ENCODE measurements at regions of chr19 and their contacts with region 1.

Region 1: DNA sequence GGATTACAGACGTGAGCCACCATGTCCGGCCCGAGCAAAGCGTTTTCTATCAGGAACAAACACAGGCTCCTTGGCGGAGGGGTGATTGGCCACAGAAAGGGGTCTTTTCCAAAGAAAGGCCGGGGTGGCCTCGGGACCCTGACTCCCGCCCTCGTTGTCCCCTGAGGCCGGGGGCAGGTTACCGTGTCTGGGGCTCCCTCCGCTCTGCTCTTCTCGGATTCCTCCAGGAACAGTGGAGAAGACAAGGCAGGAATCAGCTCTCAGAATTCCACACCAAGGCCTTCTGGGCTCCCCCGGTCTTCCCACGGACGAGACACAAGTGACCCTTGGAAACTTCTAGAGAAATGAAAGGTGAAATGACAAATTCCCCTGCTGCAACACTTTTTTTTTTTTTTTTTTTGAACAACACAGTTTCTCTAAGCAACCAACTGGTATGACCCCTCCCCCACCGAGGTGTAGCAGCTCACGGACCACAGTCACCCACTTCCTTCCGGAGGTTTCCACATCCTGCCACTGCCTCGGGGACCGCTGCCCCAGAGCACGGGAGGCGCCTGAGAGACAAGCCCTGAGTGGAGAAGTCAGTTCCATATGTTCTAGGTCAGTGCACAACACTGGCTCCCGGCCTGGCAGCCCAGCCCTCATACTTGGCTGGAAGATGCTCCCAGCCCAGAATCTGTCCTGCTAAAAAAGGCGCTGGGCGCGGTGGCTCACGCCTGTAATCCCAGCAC is 11.0 kb downstream of the MOB3A start:
- DNase-seq: peak in 3 of 4 donors; percentile 43 to 82 (median 49)
- ATAC-seq: no peak
- H3K4me3 ChIP-seq: no peak overlapping the region
- H3K27ac ChIP-seq: peak overlapping the region in 2 of 4 donors; percentile 34 to 53
- H3K4me1 ChIP-seq: peaks cover 9% of the 10 kb centered on the region
- H3K27me3 ChIP-seq: no peaks in the 10 kb centered on the region
- CTCF ChIP-seq: no peak
- POLR2A ChIP-seq: peak in 1 of 3 donors; percentile 17

Region 2: DNA sequence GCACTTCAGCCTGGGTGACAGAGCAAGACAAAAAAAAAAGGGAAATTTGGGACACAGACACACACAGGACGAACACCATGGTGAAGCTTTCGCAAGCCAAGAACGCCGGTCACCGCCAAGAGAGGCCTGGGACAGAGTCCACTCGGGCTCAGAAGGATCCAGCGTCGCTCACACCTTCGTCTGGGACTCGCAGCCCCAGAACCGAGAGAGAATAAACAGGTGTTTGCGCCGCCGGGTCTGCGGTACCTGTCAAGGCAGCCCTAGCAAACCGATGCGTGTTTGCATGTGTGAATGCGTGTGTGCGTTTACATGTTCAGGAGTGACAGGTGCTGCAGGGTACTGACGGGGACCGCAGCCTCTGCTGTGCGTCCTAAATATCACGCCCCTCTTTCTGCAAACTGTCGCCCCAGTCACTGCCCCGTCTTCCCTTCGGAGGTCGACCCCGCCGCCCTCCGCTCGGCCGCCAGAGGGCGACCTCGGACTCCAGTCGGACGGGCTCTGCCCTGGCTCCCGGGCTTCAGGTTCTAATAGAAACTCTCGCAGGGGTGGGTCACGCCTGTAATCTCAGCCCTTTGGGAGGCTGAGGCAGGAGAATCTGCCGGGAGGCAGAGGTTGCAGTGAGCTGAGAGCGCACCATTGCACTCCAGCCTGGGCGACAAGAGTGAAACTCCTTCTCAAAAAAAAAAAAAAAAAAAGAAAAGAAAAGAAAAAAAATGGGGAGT is 156.0 kb before region 1 on chr19:
- intact Hi-C with region 1: loop called (anchors 10 kb)
- DNase-seq: peak; percentile 80 to 90 (median 82)
- ATAC-seq: peak; percentile 93
- H3K4me3 ChIP-seq: no peak overlapping the region
- H3K27ac ChIP-seq: peak overlapping the region in 3 of 4 donors; percentile 51 to 56 (median 53)
- H3K4me1 ChIP-seq: peaks cover 16% of the 10 kb centered on the region
- H3K27me3 ChIP-seq: no peaks in the 10 kb centered on the region
- CTCF ChIP-seq: peak; percentile 78 to 91 (median 87)
- POLR2A ChIP-seq: peak in 1 of 3 donors; percentile 11

Region 3: DNA sequence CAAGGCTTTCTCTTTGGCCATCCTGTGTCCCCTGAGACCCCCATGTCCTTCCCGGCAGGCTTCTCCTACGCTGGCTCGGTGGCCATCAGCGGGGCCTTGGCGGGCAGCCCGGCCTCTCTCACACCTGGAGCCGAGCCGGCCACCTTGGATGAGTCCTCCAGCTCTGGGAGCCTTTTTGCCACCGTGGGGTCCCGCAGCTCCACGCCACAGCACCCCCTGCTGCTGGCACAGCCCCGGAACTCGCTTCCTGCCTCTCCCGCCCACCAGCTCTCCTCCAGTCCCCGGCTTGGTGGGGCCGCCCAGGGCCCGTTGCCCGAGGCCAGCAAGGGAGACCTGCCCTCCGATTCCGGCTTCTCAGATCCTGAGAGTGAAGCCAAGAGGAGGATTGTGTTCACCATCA is 136.8 kb after region 1 on chr19:
- intact Hi-C with region 1: no loop called
- DNase-seq: no peak
- ATAC-seq: no peak
- H3K4me3 ChIP-seq: no peak overlapping the region
- H3K27ac ChIP-seq: no peak overlapping the region
- H3K4me1 ChIP-seq: peaks cover 11% of the 10 kb centered on the region
- H3K27me3 ChIP-seq: no peaks in the 10 kb centered on the region
- CTCF ChIP-seq: peak in 1 of 7 experiments; percentile 5
- POLR2A ChIP-seq: no peak

Region 4: DNA sequence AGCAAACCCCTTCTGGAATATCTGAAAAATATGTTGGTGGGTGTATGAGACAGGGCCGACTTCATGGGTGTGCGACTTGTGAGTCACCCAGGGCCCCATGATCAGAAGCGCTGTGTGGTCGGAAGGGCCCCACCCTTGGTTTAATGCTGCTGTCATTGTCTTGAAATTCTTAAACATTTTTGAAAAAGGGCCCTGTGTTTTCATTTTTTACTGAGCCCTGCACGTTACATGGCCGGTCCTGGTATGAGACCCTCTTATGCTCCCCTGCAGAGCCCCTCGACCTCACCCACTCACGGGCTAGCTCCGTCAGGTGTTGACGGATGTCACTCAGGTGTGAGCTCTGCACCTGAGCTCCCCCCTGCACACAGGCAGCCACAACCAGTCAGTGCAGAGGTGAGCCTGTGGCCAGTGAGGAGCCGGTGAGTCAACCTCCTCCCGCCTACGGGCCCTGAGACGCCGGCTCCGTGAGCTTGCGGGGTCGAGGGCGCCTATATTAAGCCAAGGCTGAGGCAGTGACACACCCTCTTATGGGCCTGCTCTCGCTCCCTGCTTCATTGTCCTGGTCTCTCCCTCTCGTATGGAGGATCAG is 418.5 kb after region 1 on chr19:
- intact Hi-C with region 1: no loop called
- DNase-seq: no peak
- ATAC-seq: no peak
- H3K4me3 ChIP-seq: no peak overlapping the region
- H3K27ac ChIP-seq: no peak overlapping the region
- H3K4me1 ChIP-seq: peaks cover 22% of the 10 kb centered on the region
- H3K27me3 ChIP-seq: no peaks in the 10 kb centered on the region
- CTCF ChIP-seq: no peak
- POLR2A ChIP-seq: no peak